Panc1 (cell line): ENCODE measurements at regions of chr2 and their contacts with region 1.

Region 1: DNA sequence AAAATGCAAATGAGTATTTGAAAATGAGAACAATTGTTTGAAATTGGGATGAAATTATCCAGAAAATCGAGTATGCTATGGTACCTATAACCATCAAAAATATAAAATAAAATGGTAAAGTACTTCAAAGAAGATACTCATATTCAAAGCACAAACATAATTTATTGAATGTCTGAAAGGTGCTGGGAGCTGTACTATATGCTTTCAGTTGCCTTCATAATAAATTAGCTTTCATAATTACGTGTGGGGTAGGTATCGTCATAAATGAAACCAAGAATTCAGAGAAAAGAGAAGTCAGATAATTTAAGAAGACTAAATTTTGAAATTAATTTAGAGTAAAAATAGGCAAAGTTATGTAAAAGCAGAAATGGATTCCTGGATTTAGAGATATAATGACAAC is 721.9 kb upstream of the ACVR2A start:
- DNase-seq: no peak
- ATAC-seq: no peak
- H3K4me3 ChIP-seq: no peak overlapping the region
- H3K27ac ChIP-seq: no peak overlapping the region
- H3K4me1 ChIP-seq: no peaks in the 10 kb centered on the region
- H3K27me3 ChIP-seq: no peaks in the 10 kb centered on the region
- CTCF ChIP-seq: no peak

Region 2: GRCh38 chr2:145652571-145653545 is 1470.1 kb before region 1 on chr2:
- CTCF ChIA-PET with region 1: interaction called, 20 read pairs
- POLR2A ChIA-PET with region 1: no interaction called
- in situ Hi-C with region 1: no loop called
- intact Hi-C with region 1: no loop called
- DNase-seq: no peak
- ATAC-seq: no peak
- H3K4me3 ChIP-seq: no peak overlapping the region
- H3K27ac ChIP-seq: no peak overlapping the region
- H3K4me1 ChIP-seq: no peaks in the 10 kb centered on the region
- H3K27me3 ChIP-seq: no peaks in the 10 kb centered on the region
- CTCF ChIP-seq: no peak

Region 3: DNA sequence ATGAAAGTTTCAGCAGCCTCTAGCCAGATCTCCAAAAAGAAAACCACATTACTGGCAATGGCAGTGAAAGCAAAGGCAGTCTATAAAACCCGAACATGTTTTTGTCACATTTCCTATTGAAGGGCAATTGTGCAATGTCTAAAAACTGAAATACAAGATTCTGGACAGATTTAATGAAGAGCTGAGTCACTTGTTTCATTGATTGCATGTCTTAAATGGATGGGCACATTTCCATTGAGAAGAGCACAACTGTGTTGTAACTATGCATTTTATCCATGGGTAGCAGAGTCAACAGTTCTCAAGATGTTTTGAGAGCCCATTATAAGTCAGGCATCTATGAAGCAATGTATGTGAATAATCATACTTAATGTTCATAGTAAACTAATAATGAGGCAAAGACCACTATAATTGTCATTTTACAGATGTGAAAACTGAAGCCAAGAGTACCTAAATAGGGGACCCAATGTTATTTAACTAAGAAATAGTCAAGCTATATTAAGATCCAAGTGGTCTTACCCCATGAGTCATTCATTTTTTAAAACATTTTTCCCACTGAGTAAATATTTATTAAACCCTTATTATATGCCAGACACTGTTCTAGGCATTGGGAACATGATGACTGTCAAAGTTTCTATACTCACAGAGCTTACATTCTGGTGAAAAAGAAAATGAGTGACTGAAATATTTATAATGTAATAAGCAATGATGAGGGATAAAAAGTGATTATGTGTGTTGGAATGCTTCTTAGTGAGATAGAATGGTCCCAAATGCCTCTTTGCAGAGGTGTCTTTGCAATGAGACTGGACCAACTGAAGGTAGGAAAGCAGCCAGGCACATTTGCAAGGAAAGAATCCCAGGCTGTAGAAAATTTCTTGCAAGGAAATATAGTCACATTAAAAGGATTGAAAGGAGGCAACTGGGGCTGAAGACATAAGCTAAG is 97.0 kb before region 1 on chr2:
- CTCF ChIA-PET with region 1: no interaction called
- POLR2A ChIA-PET with region 1: no interaction called
- in situ Hi-C with region 1: no loop called
- intact Hi-C with region 1: no loop called
- DNase-seq: no peak
- ATAC-seq: no peak
- H3K4me3 ChIP-seq: no peak overlapping the region
- H3K27ac ChIP-seq: no peak overlapping the region
- H3K4me1 ChIP-seq: no peaks in the 10 kb centered on the region
- H3K27me3 ChIP-seq: no peaks in the 10 kb centered on the region
- CTCF ChIP-seq: no peak